CD4-positive, alpha-beta memory T cell (primary cell): ENCODE measurements at regions of chr7 and their contacts with region 1.

Region 1: DNA sequence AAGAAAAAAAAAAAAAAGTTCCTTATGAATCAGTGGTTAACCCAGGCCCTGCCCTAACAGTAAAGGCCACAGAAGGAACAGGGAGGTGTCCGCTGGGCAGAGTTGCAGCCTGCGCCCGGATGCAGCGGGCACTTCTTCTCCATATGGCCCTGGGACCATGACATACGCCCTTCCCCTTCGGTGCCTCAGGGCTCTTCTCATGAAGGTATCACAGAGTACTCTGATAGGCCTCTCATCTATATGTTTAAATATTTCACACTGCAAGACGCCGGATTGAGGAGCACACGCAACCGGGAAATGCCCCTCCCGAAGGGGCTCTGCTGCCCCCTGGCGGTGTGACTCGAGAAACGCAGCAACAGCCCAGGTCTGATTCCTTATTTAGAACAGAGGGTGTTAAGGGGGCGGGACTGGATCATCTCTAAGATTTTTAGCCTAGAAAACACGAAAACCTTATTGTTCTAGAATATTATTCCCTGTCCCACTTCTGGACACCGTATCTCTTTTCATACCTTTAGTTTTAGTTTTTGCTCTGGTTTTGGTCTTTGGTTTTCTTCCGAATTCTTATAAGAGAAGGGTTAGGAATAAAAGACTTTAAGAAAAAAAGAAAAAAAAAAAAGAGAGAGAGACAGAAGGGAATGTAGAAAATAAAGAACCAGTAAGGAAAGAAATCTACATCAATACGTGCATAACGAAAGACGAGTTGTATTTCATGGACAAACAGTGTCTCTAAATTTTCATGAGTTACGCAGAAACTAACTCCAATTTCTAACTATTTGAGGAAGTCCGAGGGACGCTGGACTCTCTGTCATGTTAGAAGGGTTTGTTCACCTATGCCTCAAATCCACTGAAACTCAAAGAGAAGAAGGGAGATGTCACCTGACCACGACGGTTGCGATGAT is 12.0 kb downstream of the DAGLB start:
- DNase-seq: peak; percentile 84 to 87 (median 86)
- H3K4me3 ChIP-seq: peak overlapping the region; percentile 23 to 34
- H3K4me3 Mint-ChIP-seq: peak overlapping the region; percentile 58 to 84 (median 78)
- H3K27ac ChIP-seq: peak overlapping the region; percentile 33
- H3K27ac Mint-ChIP-seq: peak overlapping the region; percentile 65 to 94 (median 83)
- H3K4me1 ChIP-seq: peaks cover 41% of the 10 kb centered on the region
- H3K4me1 Mint-ChIP-seq: peaks cover 22 to 47% (median 35%) of the 10 kb centered on the region in 4 donors
- H3K27me3 ChIP-seq: no peaks in the 10 kb centered on the region
- H3K27me3 Mint-ChIP-seq: no peaks in the 10 kb centered on the region

Region 2: GRCh38 chr7:6160191-6160623 is 275.5 kb before region 1 on chr7:
- CTCF ChIA-PET with region 1: interaction called, 4 read pairs
- POLR2A ChIA-PET with region 1: no interaction called
- intact Hi-C with region 1: loop called (anchors 5 kb)
- DNase-seq: peak in 1 of 5 donors; percentile 10
- H3K4me3 ChIP-seq: no peak overlapping the region
- H3K4me3 Mint-ChIP-seq: no peak overlapping the region
- H3K27ac ChIP-seq: no peak overlapping the region
- H3K27ac Mint-ChIP-seq: peak overlapping the region in 1 of 7 donors; percentile 18
- H3K4me1 ChIP-seq: no peaks in the 10 kb centered on the region
- H3K4me1 Mint-ChIP-seq: peaks cover 3 to 12% (median 6%) of the 10 kb centered on the region in 4 donors
- H3K27me3 ChIP-seq: no peaks in the 10 kb centered on the region
- H3K27me3 Mint-ChIP-seq: no peaks in the 10 kb centered on the region

Region 3: GRCh38 chr7:6409991-6410693 is 25.6 kb before region 1 on chr7:
- CTCF ChIA-PET with region 1: no interaction called
- POLR2A ChIA-PET with region 1: no interaction called
- intact Hi-C with region 1: no loop called
- DNase-seq: no peak
- H3K4me3 ChIP-seq: no peak overlapping the region
- H3K4me3 Mint-ChIP-seq: no peak overlapping the region
- H3K27ac ChIP-seq: no peak overlapping the region
- H3K27ac Mint-ChIP-seq: peak overlapping the region in 1 of 7 donors; percentile 35
- H3K4me1 ChIP-seq: no peaks in the 10 kb centered on the region
- H3K4me1 Mint-ChIP-seq: no peaks in the 10 kb centered on the region
- H3K27me3 ChIP-seq: no peaks in the 10 kb centered on the region
- H3K27me3 Mint-ChIP-seq: no peaks in the 10 kb centered on the region

Region 4: DNA sequence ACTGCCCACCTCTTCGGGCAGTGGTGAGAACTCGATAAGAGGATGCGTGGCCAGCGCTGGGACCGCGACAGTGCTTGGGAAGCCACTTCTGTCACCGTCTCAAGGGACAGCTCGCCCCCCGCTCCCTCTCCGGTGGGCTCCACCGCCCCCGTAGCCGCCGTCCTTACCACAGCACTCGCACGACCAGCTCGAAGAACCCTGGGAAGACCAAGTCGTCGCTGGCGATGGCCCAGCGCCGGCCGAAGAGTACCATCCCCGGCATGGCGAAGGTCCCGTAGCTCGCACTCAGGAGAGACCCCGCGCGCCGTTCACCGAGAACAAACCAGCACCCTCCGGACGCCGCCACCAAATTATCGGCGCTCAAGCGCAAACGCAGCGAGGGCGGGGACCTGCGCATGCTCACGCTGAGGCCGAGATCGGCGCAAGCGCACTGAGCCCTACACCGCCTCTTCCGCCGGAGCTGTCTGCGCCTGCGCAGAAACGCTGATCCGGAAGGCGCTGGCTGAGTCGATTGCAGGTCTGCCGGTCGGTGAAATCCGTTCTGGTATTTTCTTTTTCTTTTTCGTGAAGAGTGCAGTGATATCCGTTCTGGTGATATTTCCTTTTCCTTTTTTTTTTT is 12.0 kb after region 1 on chr7 and contains the start of gene DAGLB:
- CTCF ChIA-PET with region 1: interaction called, 11 read pairs
- POLR2A ChIA-PET with region 1: interaction called, 41 read pairs
- intact Hi-C with region 1: loop called (anchors 1 kb)
- DNase-seq: peak; percentile 94 to 98 (median 96)
- H3K4me3 ChIP-seq: peak within 1 kb of the TSS; percentile 88 to 89
- H3K4me3 Mint-ChIP-seq: peak within 1 kb of the TSS; percentile 86 to 98 (median 94)
- H3K27ac ChIP-seq: peak within 1 kb of the TSS; percentile 86
- H3K27ac Mint-ChIP-seq: peak within 1 kb of the TSS; percentile 93 to 99 (median 96)
- H3K4me1 ChIP-seq: peaks cover 15% of the 10 kb centered on the region
- H3K4me1 Mint-ChIP-seq: peaks cover 20 to 52% (median 32%) of the 10 kb centered on the region in 4 donors
- H3K27me3 ChIP-seq: no peaks in the 10 kb centered on the region
- H3K27me3 Mint-ChIP-seq: peaks cover 0 to 3% of the 10 kb centered on the region in 2 donors
- total RNA-seq, gene DAGLB: 36.4 to 37.0 TPM